ENCODE measurements at regions of chr1 and their contacts with region 1.

Region 1: GRCh38 chr1:189891485-189891884 is 586.2 kb downstream of the BRINP3 start:
- DNase-seq: no peak
- ATAC-seq: no peak
- H3K4me3 ChIP-seq: no peak overlapping the region
- H3K27ac ChIP-seq: no peak overlapping the region
- H3K4me1 ChIP-seq: no peaks in the 10 kb centered on the region
- H3K27me3 ChIP-seq: no peaks in the 10 kb centered on the region
- CTCF ChIP-seq: no peak
- POLR2A ChIP-seq: no peak
- RAD21 ChIP-seq: no peak

Region 2: DNA sequence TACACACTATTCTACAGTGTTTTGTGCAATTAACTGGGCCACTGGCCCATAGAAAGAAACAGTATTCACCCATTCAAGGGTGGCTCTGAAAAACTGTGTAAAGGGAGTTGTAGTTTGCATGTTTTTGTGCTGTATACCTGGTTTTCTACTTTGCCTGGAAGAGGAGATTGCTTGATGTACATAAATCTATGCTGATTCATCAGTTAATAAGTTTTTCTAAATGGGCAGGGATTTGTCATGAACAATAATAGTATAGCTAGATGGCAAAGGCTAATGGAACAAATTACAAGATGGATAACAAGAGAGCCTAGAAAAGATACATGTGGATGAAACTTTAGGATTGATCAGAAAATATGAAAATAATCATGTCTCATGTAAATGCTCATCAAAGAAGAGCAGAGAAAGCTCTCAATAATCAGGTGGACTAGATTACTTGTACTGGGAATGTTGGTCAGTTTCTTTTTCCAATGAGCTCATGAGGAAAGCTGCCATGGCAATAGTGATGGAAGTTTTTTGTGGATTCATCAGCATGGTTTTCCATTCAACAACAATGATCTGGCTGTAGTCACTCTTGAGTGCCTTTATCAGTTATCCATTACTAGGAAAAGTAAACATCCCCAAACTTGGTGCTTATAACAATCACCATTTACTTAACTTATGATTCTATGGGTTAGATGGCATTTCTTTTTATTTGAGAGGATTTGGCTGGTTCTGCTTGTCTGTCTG is 16.6 kb before region 1 on chr1:
- CTCF ChIA-PET with region 1: no interaction called
- POLR2A ChIA-PET with region 1: no interaction called
- RAD21 ChIA-PET with region 1: no interaction called
- intact Hi-C with region 1: loop called (anchors 1 kb)
- DNase-seq: no peak
- ATAC-seq: no peak
- H3K4me3 ChIP-seq: no peak overlapping the region
- H3K27ac ChIP-seq: no peak overlapping the region
- H3K4me1 ChIP-seq: no peaks in the 10 kb centered on the region
- H3K27me3 ChIP-seq: no peaks in the 10 kb centered on the region
- CTCF ChIP-seq: no peak
- POLR2A ChIP-seq: no peak
- RAD21 ChIP-seq: no peak

Measured in HCT116 (cell line).